Colonic mucosa (tissue), 4 donors: ENCODE measurements at regions of chr12 and their contacts with region 1.

Region 1: DNA sequence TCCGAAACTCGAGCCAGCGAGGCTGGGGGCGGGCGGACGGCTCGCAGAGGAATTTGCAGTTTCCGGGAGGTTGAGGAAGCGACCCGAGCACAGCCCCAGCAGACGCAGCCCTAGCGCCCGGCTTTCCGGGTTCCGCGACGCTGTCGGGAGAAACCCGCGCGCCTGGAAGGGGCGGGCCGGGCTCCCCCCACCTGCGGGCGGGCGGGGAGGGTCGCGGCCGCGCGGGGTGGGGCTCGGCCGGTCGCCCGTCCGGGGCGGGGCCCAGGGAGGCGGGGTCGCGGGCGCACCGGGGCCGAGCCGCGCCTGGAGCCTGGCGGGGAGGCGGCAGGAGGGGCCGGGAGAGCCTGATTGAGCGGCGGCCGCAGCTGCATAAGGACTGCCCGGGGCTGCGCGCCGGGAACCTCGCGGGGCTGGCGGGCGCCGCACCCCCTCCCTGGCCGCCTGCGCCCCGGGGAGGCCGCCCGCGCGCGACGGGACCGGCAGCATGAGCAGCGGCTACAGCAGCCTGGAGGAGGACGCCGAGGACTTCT is at the start of gene RASSF3:
- DNase-seq: peak; percentile 81
- H3K4me3 ChIP-seq: peak within 1 kb of the TSS; percentile 85
- H3K27ac ChIP-seq: peak within 1 kb of the TSS; percentile 98
- H3K4me1 ChIP-seq: no peaks in the 10 kb centered on the region
- H3K27me3 ChIP-seq: no peaks in the 10 kb centered on the region
- CTCF ChIP-seq: no peak
- total RNA-seq, gene RASSF3: 52.6 to 90.3 TPM

Region 2: GRCh38 chr12:64556231-64556630 is 54.0 kb before region 1 on chr12:
- intact Hi-C with region 1: loop called (anchors 5 kb)
- DNase-seq: no peak
- H3K4me3 ChIP-seq: no peak overlapping the region
- H3K27ac ChIP-seq: no peak overlapping the region
- H3K4me1 ChIP-seq: no peaks in the 10 kb centered on the region
- H3K27me3 ChIP-seq: no peaks in the 10 kb centered on the region
- CTCF ChIP-seq: no peak

Region 3: DNA sequence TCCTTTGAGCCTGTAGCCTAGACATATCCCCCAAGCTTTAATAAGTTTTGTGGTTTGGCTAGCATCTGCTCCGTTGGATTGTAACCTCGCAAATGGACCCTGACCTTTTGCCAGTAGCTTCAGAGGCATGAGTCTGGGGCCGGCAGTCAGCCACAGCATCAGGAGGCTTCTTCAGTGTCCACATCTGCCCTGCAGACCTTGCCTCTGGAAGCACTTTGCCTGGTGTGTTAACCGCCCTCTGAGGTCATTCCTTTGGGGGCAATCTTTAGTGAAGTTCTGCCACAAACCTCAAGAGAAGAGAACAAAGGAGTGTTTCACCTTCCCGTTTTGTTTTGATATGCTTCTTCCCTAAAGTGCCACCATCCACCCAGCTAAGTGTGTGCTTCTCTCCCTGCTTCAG is 77.6 kb after region 1 on chr12:
- intact Hi-C with region 1: loop called (anchors 5 kb)
- DNase-seq: no peak
- H3K4me3 ChIP-seq: no peak overlapping the region
- H3K27ac ChIP-seq: no peak overlapping the region
- H3K4me1 ChIP-seq: no peaks in the 10 kb centered on the region
- H3K27me3 ChIP-seq: no peaks in the 10 kb centered on the region
- CTCF ChIP-seq: no peak